ENCODE measurements at regions of chr17 and their contacts with region 1.

Region 1: DNA sequence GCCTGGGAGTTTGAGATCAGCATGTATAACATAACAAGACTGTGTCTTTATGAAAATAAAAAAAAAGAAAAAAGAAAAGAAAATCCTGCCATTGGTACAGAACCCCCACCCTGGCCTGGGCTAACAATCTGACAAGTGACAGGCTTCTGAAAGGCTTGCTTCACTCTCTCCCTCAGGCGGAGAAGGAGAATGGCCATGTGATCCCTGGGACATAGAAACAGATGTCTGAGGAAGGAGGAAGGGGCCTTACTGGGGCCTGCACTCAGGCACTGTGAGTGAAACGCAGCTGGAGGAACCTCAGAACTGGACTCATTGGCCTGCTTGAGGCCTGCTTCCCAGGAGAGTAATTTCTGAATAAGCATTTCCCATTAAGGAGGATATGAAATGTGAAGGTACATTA is 17.5 kb downstream of the MAP3K14 start:
- DNase-seq: no peak
- ATAC-seq: no peak
- H3K4me3 ChIP-seq: no peak overlapping the region
- H3K4me3 Mint-ChIP-seq: peak overlapping the region; percentile 48
- H3K27ac ChIP-seq: peak overlapping the region in 1 of 2 donors; percentile 25
- H3K27ac Mint-ChIP-seq: peak overlapping the region; percentile 88
- H3K4me1 ChIP-seq: peaks cover 93 to 95% of the 10 kb centered on the region in 2 donors
- H3K4me1 Mint-ChIP-seq: peaks cover 88% of the 10 kb centered on the region
- H3K27me3 ChIP-seq: no peaks in the 10 kb centered on the region
- H3K27me3 Mint-ChIP-seq: no peaks in the 10 kb centered on the region
- CTCF ChIP-seq: no peak

Region 2: GRCh38 chr17:44749076-44749979 is 550.0 kb before region 1 on chr17:
- CTCF ChIA-PET with region 1: no interaction called
- POLR2A ChIA-PET with region 1: no interaction called
- intact Hi-C with region 1: no loop called
- DNase-seq: no peak
- ATAC-seq: no peak
- H3K4me3 ChIP-seq: no peak overlapping the region
- H3K4me3 Mint-ChIP-seq: no peak overlapping the region
- H3K27ac ChIP-seq: no peak overlapping the region
- H3K27ac Mint-ChIP-seq: no peak overlapping the region
- H3K4me1 ChIP-seq: no peaks in the 10 kb centered on the region
- H3K4me1 Mint-ChIP-seq: no peaks in the 10 kb centered on the region
- H3K27me3 ChIP-seq: no peaks in the 10 kb centered on the region
- H3K27me3 Mint-ChIP-seq: peaks cover 3% of the 10 kb centered on the region
- CTCF ChIP-seq: no peak

Region 3: GRCh38 chr17:44947461-44948314 is 351.7 kb before region 1 on chr17 and contains the start of gene KIF18B:
- CTCF ChIA-PET with region 1: no interaction called
- POLR2A ChIA-PET with region 1: no interaction called
- intact Hi-C with region 1: no loop called
- DNase-seq: peak; percentile 91
- ATAC-seq: peak; percentile 98
- H3K4me3 ChIP-seq: peak within 1 kb of the TSS; percentile 62 to 79 (median 67)
- H3K4me3 Mint-ChIP-seq: peak within 1 kb of the TSS; percentile 99
- H3K27ac ChIP-seq: peak within 1 kb of the TSS; percentile 56 to 64
- H3K27ac Mint-ChIP-seq: peak within 1 kb of the TSS; percentile 95
- H3K4me1 ChIP-seq: peaks cover 7 to 15% of the 10 kb centered on the region in 2 donors
- H3K4me1 Mint-ChIP-seq: peaks cover 8% of the 10 kb centered on the region
- H3K27me3 ChIP-seq: peaks cover 0 to 4% (median 4%) of the 10 kb centered on the region in 4 experiments
- H3K27me3 Mint-ChIP-seq: peaks cover 6% of the 10 kb centered on the region
- CTCF ChIP-seq: no peak
- total RNA-seq, gene KIF18B: 0.44 TPM in 1 of 2 replicates, not detected in the other

Region 4: DNA sequence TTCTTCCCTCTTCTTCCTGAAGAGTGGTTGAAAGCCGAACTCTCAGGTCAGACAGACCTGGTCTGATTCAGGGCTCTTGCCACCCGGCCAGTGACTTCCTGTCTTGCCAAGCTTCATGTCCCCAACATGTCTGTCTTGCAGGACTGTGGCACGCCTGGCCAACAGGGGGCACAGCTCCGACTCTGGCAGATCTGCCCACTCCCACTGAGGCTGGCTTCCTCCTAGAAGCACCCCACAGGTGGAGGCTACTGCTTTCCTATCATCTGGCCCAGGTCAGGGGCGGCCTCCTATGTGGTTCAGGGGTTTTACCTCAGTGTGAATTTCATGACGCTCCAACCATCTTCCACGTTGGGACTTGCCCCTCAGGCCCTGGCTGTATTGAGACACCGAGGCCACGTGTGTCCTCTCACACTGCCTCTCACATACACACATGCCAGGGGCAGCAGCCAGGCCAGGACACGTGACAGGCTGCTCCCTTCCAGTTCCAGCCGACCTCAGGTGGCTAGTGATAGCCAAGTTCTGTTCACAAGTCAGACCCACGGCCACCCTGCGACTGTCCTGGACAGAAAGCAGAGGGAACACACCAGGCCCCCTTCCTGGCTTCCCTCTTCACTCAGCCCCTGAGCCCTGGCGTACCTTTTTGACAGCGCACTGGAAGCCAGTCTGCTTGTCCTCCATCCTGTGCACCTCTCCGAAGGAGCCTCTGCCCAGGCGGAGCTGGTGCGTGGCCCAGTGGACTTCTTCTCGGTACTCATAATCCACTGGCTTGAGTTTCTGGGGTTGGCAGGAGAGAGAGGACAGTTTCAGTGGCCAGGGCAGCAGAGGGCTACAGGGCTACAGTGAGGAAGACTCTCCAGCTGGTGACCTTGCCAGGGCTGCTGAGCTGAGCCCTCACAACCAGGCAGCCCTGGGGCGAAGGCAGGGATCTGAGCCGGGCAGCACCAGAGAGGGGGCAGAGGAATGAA is 14.9 kb before region 1 on chr17:
- CTCF ChIA-PET with region 1: interaction called, 10 read pairs
- POLR2A ChIA-PET with region 1: interaction called, 6 read pairs
- intact Hi-C with region 1: no loop called
- DNase-seq: peak; percentile 50
- ATAC-seq: peak; percentile 65
- H3K4me3 ChIP-seq: no peak overlapping the region
- H3K4me3 Mint-ChIP-seq: no peak overlapping the region
- H3K27ac ChIP-seq: peak overlapping the region in 1 of 2 donors; percentile 35
- H3K27ac Mint-ChIP-seq: peak overlapping the region; percentile 61
- H3K4me1 ChIP-seq: peaks cover 0 to 8% of the 10 kb centered on the region in 2 donors
- H3K4me1 Mint-ChIP-seq: peaks cover 4% of the 10 kb centered on the region
- H3K27me3 ChIP-seq: no peaks in the 10 kb centered on the region
- H3K27me3 Mint-ChIP-seq: no peaks in the 10 kb centered on the region
- CTCF ChIP-seq: peak; percentile 33

Measured in B cell (primary cell).